Activated B cell treated with CpG ODN at 0.5 μM for 24 hours (primary cell): ENCODE measurements at regions of chr3 and their contacts with region 1.

Region 1: DNA sequence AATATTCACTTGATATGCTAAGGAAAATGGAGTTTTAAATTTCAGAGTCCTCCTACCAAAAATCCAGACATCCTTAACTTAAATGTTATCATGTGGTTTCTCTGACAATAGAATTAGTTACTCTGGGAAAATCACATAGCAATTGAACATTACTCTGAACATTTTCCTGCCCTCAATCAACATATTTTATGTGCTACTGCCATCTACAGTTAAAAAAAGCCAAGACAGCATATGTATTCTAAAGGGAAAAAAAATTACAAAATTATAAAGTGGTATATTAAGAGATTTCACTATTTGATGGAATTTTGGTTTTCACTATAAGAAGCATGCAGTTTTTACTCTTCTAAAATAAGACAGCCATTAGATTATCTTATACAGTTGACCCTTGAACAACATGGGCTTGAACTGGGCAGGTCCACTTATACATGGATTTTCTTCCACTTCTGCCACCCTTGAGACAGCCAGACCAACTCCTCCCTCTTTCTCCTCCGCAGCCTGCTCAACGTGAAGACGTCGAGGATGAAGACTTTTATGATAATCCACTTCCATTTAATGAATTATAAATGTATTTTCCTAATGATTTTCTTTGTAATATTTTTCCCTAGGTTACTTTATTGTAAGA is 122.3 kb downstream of the ATP1B3 start:
- DNase-seq: no peak
- ATAC-seq: no peak
- H3K4me3 Mint-ChIP-seq: no peak overlapping the region
- H3K27ac Mint-ChIP-seq: no peak overlapping the region
- H3K4me1 Mint-ChIP-seq: peaks cover 3% of the 10 kb centered on the region
- H3K27me3 Mint-ChIP-seq: no peaks in the 10 kb centered on the region
- CTCF ChIP-seq: no peak

Region 2: DNA sequence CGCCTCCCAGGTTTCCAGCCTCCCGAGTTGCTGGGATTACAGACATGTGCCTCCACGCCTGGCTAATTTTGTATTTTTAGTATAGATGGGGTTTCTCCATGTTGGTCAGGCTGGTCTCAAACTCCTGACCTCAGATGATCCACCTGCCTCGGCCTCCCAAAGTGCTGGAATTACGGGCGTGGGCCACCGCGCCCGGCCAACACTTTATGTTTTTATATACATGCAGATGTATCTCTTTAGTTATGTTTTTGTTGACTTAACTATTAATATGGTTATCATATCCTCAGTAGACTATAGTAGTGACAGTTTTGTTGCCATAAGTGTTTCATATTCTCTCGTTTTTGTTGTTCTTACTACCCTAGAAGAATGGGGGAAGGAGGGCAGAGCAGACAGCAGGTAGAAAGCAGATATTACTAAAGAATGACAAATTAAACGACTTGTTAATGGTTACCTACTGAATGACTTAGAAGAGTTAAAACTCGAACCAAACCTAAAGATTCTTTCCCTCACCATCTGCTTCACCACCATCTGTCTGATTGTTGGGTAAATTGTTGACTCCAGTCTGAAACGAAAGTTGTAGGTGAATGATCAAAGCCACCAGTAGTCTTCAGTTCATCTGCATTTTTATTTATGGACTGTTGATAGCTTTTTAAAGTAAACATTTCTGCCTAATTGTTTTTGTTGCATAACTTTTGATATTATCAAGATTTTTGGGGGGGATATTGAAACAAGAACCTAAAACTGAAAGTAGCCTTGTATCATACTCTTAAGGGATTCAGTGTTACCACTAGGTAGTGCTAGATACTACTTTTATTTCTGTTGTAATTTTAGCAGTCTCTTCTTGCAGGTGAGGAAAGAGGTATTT is 422.7 kb before region 1 on chr3:
- CTCF ChIA-PET with region 1: no interaction called
- POLR2A ChIA-PET with region 1: no interaction called
- intact Hi-C with region 1: loop called (anchors 1 kb)
- DNase-seq: no peak
- ATAC-seq: peak; percentile 47
- H3K4me3 Mint-ChIP-seq: no peak overlapping the region
- H3K27ac Mint-ChIP-seq: peak overlapping the region; percentile 19
- H3K4me1 Mint-ChIP-seq: peaks cover 5% of the 10 kb centered on the region
- H3K27me3 Mint-ChIP-seq: no peaks in the 10 kb centered on the region
- CTCF ChIP-seq: no peak

Region 3: DNA sequence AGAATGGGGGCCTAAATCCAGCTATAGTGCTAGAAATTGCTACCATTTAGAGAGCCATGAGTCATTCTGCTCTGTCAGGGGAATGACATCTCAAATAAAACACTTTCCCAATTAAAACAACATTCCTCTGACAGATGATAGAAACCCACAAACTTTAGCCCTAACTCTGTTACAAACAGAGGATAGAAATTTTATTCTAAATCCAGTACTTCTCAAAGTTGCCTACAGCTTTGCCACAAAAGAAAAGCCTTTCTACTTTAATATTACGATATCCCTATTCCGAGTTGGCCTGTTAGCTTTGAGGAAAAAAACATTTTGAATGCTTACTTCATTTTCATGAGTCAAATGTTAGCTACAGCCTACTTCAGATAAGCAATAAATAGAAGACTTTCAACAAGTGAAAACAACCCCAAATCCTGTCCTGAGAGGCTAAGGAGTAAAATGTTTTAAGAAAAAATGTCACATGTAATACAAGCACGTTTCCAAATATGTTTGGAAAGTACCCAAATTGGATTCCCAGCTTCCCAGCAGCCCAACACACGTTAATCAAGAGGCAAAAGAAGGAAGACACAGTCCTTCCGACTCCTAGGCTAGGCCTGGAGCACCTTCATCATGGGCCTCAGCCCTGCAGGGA is 38.7 kb before region 1 on chr3:
- CTCF ChIA-PET with region 1: no interaction called
- POLR2A ChIA-PET with region 1: no interaction called
- intact Hi-C with region 1: loop called (anchors 1 kb)
- DNase-seq: no peak
- ATAC-seq: no peak
- H3K4me3 Mint-ChIP-seq: no peak overlapping the region
- H3K27ac Mint-ChIP-seq: no peak overlapping the region
- H3K4me1 Mint-ChIP-seq: no peaks in the 10 kb centered on the region
- H3K27me3 Mint-ChIP-seq: no peaks in the 10 kb centered on the region
- CTCF ChIP-seq: no peak